Caco-2 (cell line): ENCODE measurements at regions of chr9 and their contacts with region 1.

Region 1: GRCh38 chr9:4228606-4229005 is 71.3 kb downstream of the GLIS3 start:
- DNase-seq: peak in 1 of 2 experiments; percentile 11
- H3K4me3 ChIP-seq: no peak overlapping the region
- H3K4me3 Mint-ChIP-seq: no peak overlapping the region
- H3K27ac Mint-ChIP-seq: no peak overlapping the region
- H3K4me1 ChIP-seq: peaks cover 21% of the 10 kb centered on the region
- H3K4me1 Mint-ChIP-seq: peaks cover 2% of the 10 kb centered on the region
- H3K27me3 ChIP-seq: no peaks in the 10 kb centered on the region
- H3K27me3 Mint-ChIP-seq: no peaks in the 10 kb centered on the region
- CTCF ChIP-seq: peak in 1 of 2 experiments; percentile 44

Region 2: DNA sequence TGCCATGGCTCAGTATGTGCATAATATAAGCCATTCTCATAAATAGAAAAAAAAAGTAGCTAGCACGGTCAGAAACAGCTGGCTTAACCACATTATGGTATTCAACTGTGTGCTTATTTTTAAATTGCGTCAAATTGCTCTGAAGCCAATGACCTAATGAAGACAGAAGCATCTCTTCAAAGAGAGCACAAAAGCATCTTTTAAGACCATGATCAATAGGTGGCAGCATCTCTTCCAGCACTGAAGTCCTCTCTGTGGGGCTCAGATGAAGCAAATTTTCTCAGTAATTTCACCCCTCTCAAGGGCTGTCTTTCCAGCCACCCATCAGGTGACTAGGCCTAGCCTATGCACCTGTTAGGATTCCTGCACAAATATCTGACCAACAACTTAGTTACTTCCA is 180.2 kb before region 1 on chr9:
- CTCF ChIA-PET with region 1: no interaction called
- POLR2A ChIA-PET with region 1: no interaction called
- intact Hi-C with region 1: loop called (anchors 1 kb)
- DNase-seq: peak; percentile 15 to 34
- H3K4me3 ChIP-seq: no peak overlapping the region
- H3K4me3 Mint-ChIP-seq: no peak overlapping the region
- H3K27ac Mint-ChIP-seq: no peak overlapping the region
- H3K4me1 ChIP-seq: 0 out of 2 replicates have a peak, but pooled peaks cover 3% of the 10 kb centered on the region
- H3K4me1 Mint-ChIP-seq: no peaks in the 10 kb centered on the region
- H3K27me3 ChIP-seq: no peaks in the 10 kb centered on the region
- H3K27me3 Mint-ChIP-seq: no peaks in the 10 kb centered on the region
- CTCF ChIP-seq: peak; percentile 35 to 40

Region 3: GRCh38 chr9:4077499-4078102 is 151.0 kb before region 1 on chr9:
- CTCF ChIA-PET with region 1: no interaction called
- POLR2A ChIA-PET with region 1: no interaction called
- intact Hi-C with region 1: loop called (anchors 1 kb)
- DNase-seq: peak; percentile 49 to 69
- H3K4me3 ChIP-seq: no peak overlapping the region
- H3K4me3 Mint-ChIP-seq: no peak overlapping the region
- H3K27ac Mint-ChIP-seq: no peak overlapping the region
- H3K4me1 ChIP-seq: peaks cover 20% of the 10 kb centered on the region
- H3K4me1 Mint-ChIP-seq: peaks cover 26% of the 10 kb centered on the region
- H3K27me3 ChIP-seq: no peaks in the 10 kb centered on the region
- H3K27me3 Mint-ChIP-seq: no peaks in the 10 kb centered on the region
- CTCF ChIP-seq: peak; percentile 36 to 50

Region 4: GRCh38 chr9:4099976-4100735 is 128.4 kb before region 1 on chr9:
- CTCF ChIA-PET with region 1: no interaction called
- POLR2A ChIA-PET with region 1: no interaction called
- intact Hi-C with region 1: no loop called
- DNase-seq: no peak
- H3K4me3 ChIP-seq: no peak overlapping the region
- H3K4me3 Mint-ChIP-seq: no peak overlapping the region
- H3K27ac Mint-ChIP-seq: no peak overlapping the region
- H3K4me1 ChIP-seq: no peaks in the 10 kb centered on the region
- H3K4me1 Mint-ChIP-seq: no peaks in the 10 kb centered on the region
- H3K27me3 ChIP-seq: no peaks in the 10 kb centered on the region
- H3K27me3 Mint-ChIP-seq: no peaks in the 10 kb centered on the region
- CTCF ChIP-seq: no peak

Region 5: DNA sequence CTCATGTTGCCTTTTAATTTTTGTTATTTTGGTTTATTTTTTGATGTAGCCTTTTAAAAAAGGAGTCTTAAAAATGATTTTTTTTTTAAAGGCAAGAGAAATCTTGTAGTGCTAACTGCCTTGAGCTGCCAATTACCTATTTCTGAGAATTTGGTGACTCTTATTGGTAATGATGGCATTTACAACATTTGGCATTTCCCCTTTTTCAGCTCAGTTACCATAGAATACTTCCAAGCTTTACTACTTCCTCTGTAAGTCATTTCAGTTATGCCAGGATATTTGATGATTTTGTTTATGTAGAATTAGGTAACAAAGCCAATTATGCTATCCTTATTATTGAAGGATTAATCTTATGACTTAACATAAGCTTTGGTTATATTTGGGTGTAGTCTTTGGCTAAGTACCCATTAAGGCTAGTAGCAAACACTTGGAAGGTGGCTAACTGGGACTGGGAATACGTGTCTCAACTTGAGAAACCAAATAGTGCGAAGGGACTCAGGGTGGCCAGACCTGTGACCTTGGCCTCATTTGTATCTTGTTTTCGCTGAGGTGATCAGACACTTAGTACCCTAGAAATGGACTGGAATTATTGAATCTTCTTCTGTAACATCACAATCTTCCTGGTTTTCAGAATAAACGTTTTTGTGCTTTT is 478.5 kb after region 1 on chr9:
- CTCF ChIA-PET with region 1: no interaction called
- POLR2A ChIA-PET with region 1: no interaction called
- intact Hi-C with region 1: no loop called
- DNase-seq: no peak
- H3K4me3 ChIP-seq: no peak overlapping the region
- H3K4me3 Mint-ChIP-seq: no peak overlapping the region
- H3K27ac Mint-ChIP-seq: no peak overlapping the region
- H3K4me1 ChIP-seq: no peaks in the 10 kb centered on the region
- H3K4me1 Mint-ChIP-seq: no peaks in the 10 kb centered on the region
- H3K27me3 ChIP-seq: no peaks in the 10 kb centered on the region
- H3K27me3 Mint-ChIP-seq: no peaks in the 10 kb centered on the region
- CTCF ChIP-seq: no peak